HCT116 (cell line): ENCODE measurements at regions of chr1 and their contacts with region 1.

Region 1: DNA sequence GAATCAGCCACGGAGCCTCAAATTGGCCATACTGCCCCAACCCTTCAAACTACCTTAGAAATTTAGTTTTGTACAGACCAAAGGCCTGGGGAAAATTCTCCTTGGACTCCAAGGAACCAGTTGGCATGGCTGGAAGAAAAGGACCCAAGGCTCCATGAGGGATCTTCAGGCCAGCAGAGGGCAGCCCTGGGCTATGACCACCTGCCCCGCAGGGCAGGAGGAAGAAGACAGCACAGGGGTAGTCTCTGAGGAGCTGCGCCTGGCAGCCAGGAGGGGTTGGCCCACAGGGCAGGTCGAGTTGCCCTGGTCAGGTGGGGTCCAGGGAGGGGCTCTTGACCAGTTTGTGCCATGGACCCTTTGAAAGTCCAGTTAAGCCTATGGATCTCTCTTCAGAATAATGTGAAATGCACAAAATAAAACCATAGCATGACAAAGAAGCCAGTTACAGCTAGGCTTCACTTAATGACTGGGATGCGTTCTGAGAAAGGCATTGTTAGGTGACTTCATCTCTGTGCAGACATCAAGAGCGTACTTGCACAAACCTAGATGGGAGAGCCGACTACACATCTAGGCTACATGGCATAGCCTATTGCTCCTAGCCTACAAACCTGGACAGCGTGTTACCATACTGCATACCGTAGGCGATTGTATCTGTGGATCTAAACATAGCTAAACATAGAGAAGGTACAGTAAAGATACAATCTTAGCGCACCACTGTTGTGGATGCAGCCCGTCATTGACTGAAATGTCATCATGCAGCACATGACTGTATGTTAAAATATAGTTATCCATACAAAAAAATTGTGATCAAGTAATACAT is 26.1 kb downstream of the CACNA1S start:
- DNase-seq: peak; percentile 51
- ATAC-seq: peak; percentile 100
- H3K4me3 ChIP-seq: no peak overlapping the region
- H3K27ac ChIP-seq: no peak overlapping the region
- H3K4me1 ChIP-seq: no peaks in the 10 kb centered on the region; a peak in 1 of 4 replicates
- H3K27me3 ChIP-seq: no peaks in the 10 kb centered on the region; the same call in 1 of the 2 replicates
- CTCF ChIP-seq: peak; percentile 83 to 94 (median 86)
- POLR2A ChIP-seq: no peak
- RAD21 ChIP-seq: peak; percentile 94

Region 2: DNA sequence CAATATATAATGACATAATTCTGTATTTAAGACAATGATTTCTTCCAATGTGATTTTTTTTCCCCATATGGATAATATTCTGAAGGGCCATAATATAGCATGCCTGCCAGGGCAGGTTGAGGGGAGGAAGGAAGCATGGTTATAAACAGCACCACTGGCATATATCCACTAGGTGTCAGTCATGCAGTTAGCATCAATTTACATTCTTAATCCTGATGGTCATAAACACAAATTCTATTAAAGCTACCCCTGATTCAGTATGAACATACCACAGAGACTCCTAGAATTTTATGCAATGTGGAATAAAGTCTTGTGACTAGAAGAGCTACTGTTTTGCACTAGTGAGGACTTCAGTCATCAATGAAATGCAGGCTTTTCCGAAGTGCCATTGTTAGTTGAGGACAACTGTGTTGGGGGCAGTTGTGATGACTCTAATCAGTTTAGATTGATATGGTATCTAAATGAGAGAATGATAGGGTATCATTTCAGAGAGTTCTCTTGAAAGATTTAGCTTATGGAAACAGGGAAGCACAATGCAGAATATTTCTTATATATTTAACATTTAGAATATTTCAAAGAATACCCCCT is 1401.3 kb before region 1 on chr1:
- CTCF ChIA-PET with region 1: no interaction called
- POLR2A ChIA-PET with region 1: no interaction called
- RAD21 ChIA-PET with region 1: no interaction called
- intact Hi-C with region 1: no loop called
- DNase-seq: peak; percentile 74
- ATAC-seq: peak; percentile 91
- H3K4me3 ChIP-seq: peak overlapping the region in 1 of 2 experiments; percentile 18; a peak in 1 of 4 replicates
- H3K27ac ChIP-seq: peak overlapping the region; percentile 30; the same call in 1 of the 2 replicates
- H3K4me1 ChIP-seq: peaks cover 14 to 49% of the 10 kb centered on the region in 2 experiments
- H3K27me3 ChIP-seq: no peaks in the 10 kb centered on the region
- CTCF ChIP-seq: peak; percentile 67 to 88 (median 75)
- POLR2A ChIP-seq: no peak
- RAD21 ChIP-seq: peak; percentile 93

Region 3: DNA sequence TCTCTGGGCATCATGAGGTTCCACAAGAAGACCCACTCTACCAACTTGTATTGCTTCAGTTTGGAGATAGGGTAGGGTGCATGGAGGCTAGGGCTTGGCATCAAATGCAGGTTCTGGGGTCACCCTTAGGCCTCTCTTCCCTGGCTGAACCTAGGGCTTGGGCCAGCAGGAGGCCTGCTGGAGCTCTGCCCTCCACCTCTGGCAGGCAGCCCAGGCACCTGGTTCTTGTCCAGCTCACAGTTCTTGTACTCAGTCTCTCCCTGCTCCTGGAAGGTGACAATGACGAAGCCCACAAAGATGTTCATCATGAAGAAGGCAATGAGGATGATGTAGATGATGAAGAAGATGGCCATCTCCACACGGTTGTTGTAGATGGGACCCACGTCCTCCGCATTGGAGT is 25.1 kb before region 1 on chr1:
- CTCF ChIA-PET with region 1: no interaction called
- POLR2A ChIA-PET with region 1: no interaction called
- RAD21 ChIA-PET with region 1: no interaction called
- intact Hi-C with region 1: no loop called
- DNase-seq: no peak
- ATAC-seq: no peak
- H3K4me3 ChIP-seq: no peak overlapping the region
- H3K27ac ChIP-seq: no peak overlapping the region
- H3K4me1 ChIP-seq: no peaks in the 10 kb centered on the region
- H3K27me3 ChIP-seq: 0 out of 2 replicates have a peak, but pooled peaks cover 5% of the 10 kb centered on the region
- CTCF ChIP-seq: no peak
- POLR2A ChIP-seq: no peak
- RAD21 ChIP-seq: no peak

Region 4: GRCh38 chr1:201114236-201115131 is 28.4 kb after region 1 on chr1:
- CTCF ChIA-PET with region 1: interaction called, 55 read pairs
- POLR2A ChIA-PET with region 1: interaction called, 5 read pairs
- RAD21 ChIA-PET with region 1: interaction called, 12 to 14 read pairs
- intact Hi-C with region 1: loop called (anchors 1 kb)
- DNase-seq: peak; percentile 89
- ATAC-seq: peak; percentile 93
- H3K4me3 ChIP-seq: peak overlapping the region; percentile 78 to 86
- H3K27ac ChIP-seq: peak overlapping the region; percentile 59; the same call in 1 of the 2 replicates
- H3K4me1 ChIP-seq: peaks cover 6 to 20% of the 10 kb centered on the region in 2 experiments; a peak in 3 of 4 replicates
- H3K27me3 ChIP-seq: no peaks in the 10 kb centered on the region
- CTCF ChIP-seq: peak; percentile 82 to 92 (median 90)
- POLR2A ChIP-seq: peak; percentile 60
- RAD21 ChIP-seq: peak; percentile 96

Region 5: DNA sequence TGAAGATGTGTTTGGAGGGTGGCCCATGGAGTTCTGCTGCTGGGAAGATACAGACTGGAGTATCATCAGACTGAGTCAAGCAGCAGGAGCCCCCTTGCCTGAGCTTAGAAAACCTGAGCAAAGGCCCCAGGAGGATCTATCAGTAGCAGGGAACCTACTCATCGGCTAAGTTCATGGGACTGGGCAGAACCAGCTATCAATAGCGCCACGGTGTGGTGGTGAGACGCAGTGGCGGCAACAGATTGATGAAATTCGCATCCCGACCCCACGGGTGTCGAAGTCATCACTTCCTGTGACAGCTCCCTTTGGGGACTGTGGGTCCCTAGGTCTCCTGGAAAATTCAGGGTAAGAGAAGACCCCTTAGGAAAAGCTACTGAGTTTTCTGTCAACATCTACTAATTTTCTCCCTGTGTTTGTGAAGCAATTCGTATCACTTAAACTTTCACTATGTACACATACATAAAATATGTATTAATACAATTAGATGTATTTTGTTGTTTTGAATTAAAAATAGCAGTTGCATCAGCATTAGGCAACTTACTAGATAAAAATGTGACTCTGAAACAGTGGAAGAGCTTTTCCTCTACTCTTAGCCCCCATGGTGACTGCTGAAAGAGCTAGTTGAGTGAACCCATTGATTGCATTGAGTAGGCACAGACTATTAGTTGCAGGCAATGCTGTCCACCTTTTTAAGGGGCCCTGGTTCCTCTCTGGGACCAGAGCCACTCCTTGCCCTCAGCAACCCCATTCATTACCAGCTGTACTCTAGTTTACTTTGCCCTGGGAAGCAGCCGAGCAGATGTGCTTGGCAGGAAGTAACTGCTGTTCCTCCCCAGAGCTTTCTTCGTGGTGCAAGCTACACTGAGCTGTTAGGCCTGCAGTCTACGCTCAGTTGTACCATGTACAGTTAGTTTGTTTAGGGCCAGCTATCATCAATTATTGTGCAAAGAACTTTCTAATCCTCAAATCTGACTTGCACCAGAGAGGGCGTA is 33.4 kb after region 1 on chr1:
- CTCF ChIA-PET with region 1: interaction called, 55 read pairs
- POLR2A ChIA-PET with region 1: interaction called, 5 read pairs
- RAD21 ChIA-PET with region 1: interaction called, 12 to 14 read pairs
- intact Hi-C with region 1: loop called (anchors 1 kb)
- DNase-seq: peak; percentile 39
- ATAC-seq: peak; percentile 53
- H3K4me3 ChIP-seq: no peak overlapping the region
- H3K27ac ChIP-seq: no peak overlapping the region
- H3K4me1 ChIP-seq: peaks cover 0 to 17% of the 10 kb centered on the region in 2 experiments; a peak in 1 of 4 replicates
- H3K27me3 ChIP-seq: peaks cover 9% of the 10 kb centered on the region; the same call in 1 of the 2 replicates
- CTCF ChIP-seq: peak; percentile 64 to 90 (median 89)
- POLR2A ChIP-seq: no peak
- RAD21 ChIP-seq: peak; percentile 67

Region 6: DNA sequence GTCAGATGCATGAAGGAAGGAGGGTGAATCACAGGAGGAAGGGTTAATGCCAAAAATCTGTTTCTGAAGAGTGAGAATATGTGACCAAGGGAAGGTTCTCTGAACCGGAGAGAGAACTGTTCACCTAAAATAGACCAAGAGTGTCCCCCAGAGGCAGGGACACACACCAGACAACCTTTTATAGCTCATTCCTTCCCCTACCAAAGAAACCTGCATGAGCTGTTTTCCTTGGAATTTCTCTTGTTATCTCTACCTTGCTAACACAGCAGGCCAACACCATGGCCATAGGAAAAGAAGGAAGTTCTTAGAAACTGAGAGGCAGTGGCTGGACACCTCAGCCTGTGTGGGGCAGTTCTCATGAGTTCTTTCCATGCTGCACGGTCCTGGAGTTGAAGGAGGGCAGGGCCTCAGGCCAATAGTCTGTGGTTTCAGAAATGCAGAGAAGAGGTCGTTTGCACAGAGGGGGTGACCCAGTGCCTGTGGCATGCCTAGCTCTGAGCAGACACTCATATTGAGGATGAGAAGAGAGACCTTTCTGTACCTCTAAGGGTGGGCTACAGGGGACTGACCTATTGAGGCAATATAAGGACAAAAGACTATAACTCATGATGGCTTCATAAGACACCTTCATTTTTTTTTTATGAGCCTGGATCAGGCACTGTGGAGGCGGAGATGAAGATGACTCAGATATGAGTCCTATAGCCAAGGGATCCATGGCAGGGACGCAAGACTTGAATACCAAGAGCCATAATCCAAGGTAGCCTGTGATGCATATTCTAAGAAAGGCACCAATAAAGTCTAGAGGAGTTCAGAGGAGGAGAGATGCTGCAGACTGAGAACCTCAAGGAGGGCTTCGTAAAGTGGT is 143.9 kb after region 1 on chr1:
- CTCF ChIA-PET with region 1: interaction called, 7 read pairs
- POLR2A ChIA-PET with region 1: no interaction called
- RAD21 ChIA-PET with region 1: no interaction called
- intact Hi-C with region 1: loop called (anchors 5 kb)
- DNase-seq: peak; percentile 15
- ATAC-seq: peak; percentile 87
- H3K4me3 ChIP-seq: no peak overlapping the region
- H3K27ac ChIP-seq: no peak overlapping the region
- H3K4me1 ChIP-seq: peaks cover 0 to 18% of the 10 kb centered on the region in 2 experiments; a peak in 2 of 4 replicates
- H3K27me3 ChIP-seq: no peaks in the 10 kb centered on the region
- CTCF ChIP-seq: peak; percentile 8 to 47 (median 41); a peak in 4 of 6 replicates
- POLR2A ChIP-seq: no peak
- RAD21 ChIP-seq: peak; percentile 60